CD8-positive, alpha-beta T cell (primary cell): ENCODE measurements at regions of chr1 and their contacts with region 1.

Region 1: DNA sequence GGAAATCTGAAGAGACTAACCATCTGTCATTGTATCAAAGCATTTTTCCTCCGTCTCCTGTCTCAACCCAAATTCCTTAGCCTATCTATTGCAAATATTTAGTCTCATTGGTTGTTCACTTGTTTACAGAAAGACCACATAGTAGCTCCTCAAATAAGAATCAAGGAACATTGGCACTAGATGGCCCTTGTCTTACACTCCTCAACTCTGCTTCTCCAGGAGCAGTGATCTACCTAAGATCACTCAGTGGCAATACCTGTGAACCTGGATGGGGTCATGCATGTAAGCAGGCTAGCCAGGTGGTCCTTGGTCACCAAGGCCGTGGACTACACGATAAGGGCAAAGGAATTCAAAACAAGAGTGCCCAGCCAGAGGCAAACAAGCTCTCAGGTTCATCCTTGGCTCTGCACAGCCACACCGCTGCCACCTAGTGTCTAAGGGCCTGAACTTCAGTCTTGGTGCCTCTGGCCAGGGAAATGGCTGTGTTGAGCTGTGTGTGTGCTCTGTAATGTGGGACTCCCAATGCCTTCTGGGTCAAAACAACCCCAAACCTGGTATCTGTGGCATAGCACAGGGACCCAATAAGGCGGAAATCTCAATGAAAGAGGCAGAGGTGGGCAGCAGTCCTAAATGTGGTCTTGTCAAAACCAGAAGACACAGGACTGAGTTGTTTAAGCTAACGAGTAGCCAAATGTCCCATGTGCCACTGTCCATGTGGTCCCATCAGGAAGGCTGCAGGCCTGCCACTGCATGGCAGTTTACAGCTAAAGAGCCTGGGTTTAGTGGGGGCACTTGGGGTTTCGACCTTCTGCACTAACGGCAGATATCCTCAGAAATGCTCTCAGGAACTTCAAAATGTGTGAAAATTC is 54.5 kb downstream of the GPR161 start:
- DNase-seq: peak; percentile 28 to 74 (median 60)
- ATAC-seq: peak; percentile 95
- H3K4me3 ChIP-seq: no peak overlapping the region
- H3K4me3 Mint-ChIP-seq: no peak overlapping the region
- H3K27ac ChIP-seq: no peak overlapping the region
- H3K27ac Mint-ChIP-seq: no peak overlapping the region
- H3K4me1 ChIP-seq: no peaks in the 10 kb centered on the region
- H3K4me1 Mint-ChIP-seq: peaks cover 5% of the 10 kb centered on the region
- H3K27me3 ChIP-seq: no peaks in the 10 kb centered on the region
- H3K27me3 Mint-ChIP-seq: no peaks in the 10 kb centered on the region
- CTCF ChIP-seq: peak; percentile 83

Region 2: GRCh38 chr1:167878372-167879160 is 203.7 kb before region 1 on chr1:
- CTCF ChIA-PET with region 1: no interaction called
- POLR2A ChIA-PET with region 1: no interaction called
- intact Hi-C with region 1: loop called in 1 of 2 experiments (anchors 5 kb)
- DNase-seq: peak in 2 of 9 experiments; percentile 2 to 4
- ATAC-seq: no peak
- H3K4me3 ChIP-seq: no peak overlapping the region
- H3K4me3 Mint-ChIP-seq: no peak overlapping the region
- H3K27ac ChIP-seq: no peak overlapping the region
- H3K27ac Mint-ChIP-seq: no peak overlapping the region
- H3K4me1 ChIP-seq: no peaks in the 10 kb centered on the region
- H3K4me1 Mint-ChIP-seq: no peaks in the 10 kb centered on the region
- H3K27me3 ChIP-seq: no peaks in the 10 kb centered on the region
- H3K27me3 Mint-ChIP-seq: no peaks in the 10 kb centered on the region
- CTCF ChIP-seq: no peak

Region 3: DNA sequence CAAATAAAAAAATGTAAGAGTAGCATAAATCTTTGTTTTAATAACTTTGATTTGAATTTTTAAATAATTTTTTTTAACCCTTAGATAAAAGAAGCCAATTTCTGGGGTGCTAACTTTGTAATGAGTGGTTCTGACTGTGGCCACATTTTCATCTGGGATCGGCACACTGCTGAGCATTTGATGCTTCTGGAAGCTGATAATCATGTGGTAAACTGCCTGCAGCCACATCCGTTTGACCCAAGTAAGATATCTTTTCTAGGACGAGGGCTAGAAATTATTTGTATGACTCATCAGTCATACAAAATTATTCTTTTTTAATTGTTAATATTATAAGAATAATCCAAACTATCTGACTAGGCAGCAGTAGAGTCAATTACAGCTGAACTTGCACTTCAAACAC is 16.7 kb before region 1 on chr1:
- CTCF ChIA-PET with region 1: interaction called, 11 read pairs
- POLR2A ChIA-PET with region 1: no interaction called
- intact Hi-C with region 1: no loop called
- DNase-seq: no peak
- ATAC-seq: no peak
- H3K4me3 ChIP-seq: no peak overlapping the region
- H3K4me3 Mint-ChIP-seq: no peak overlapping the region
- H3K27ac ChIP-seq: no peak overlapping the region
- H3K27ac Mint-ChIP-seq: no peak overlapping the region
- H3K4me1 ChIP-seq: no peaks in the 10 kb centered on the region
- H3K4me1 Mint-ChIP-seq: no peaks in the 10 kb centered on the region
- H3K27me3 ChIP-seq: no peaks in the 10 kb centered on the region
- H3K27me3 Mint-ChIP-seq: no peaks in the 10 kb centered on the region
- CTCF ChIP-seq: no peak

Region 4: DNA sequence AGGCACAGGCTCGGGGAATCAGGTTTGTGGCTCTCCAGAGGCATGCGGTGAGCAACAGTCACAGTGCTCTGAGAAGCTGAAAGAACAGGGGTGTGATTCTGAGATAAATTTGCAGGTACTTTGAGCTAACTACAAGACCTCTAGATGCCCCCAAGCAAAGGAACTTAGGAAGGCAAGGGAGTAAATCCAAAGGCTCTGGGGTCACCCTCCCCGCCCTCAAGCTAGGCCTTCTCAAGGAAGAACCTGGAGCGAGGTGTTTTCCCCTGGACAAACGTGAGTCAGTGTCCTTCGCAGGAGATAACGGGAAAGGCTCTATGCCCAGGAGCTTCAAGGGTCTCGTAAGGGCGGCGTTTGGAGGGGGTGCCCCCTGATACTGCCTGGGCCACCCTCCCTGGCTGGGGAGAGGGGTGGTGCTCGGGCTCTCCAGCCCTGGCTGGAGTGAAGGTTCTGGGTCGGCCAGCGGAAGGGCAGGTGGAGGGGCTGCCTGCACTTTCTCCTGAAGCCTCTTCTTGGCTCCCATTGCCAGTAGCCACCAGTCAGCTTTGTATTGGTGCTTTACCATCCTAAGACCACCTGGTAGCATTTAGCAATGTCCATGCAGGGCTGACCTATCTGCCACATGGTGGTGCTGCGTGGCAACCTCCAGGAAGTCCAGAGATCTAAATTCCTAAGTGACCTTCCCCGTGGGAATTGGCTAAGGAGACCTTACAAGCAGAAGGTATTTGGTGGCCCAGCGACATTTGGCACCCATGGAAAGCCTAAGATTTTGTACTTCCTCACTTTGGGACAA is 10.5 kb after region 1 on chr1:
- CTCF ChIA-PET with region 1: interaction called, 46 read pairs
- POLR2A ChIA-PET with region 1: no interaction called
- intact Hi-C with region 1: no loop called
- DNase-seq: peak in 1 of 9 experiments; percentile 41
- ATAC-seq: no peak
- H3K4me3 ChIP-seq: no peak overlapping the region
- H3K4me3 Mint-ChIP-seq: no peak overlapping the region
- H3K27ac ChIP-seq: no peak overlapping the region
- H3K27ac Mint-ChIP-seq: no peak overlapping the region
- H3K4me1 ChIP-seq: no peaks in the 10 kb centered on the region
- H3K4me1 Mint-ChIP-seq: no peaks in the 10 kb centered on the region
- H3K27me3 ChIP-seq: no peaks in the 10 kb centered on the region
- H3K27me3 Mint-ChIP-seq: peaks cover 6% of the 10 kb centered on the region
- CTCF ChIP-seq: no peak

Region 5: GRCh38 chr1:168116327-168116806 is 34.1 kb after region 1 on chr1:
- CTCF ChIA-PET with region 1: no interaction called
- POLR2A ChIA-PET with region 1: no interaction called
- intact Hi-C with region 1: no loop called
- DNase-seq: no peak
- ATAC-seq: no peak
- H3K4me3 ChIP-seq: no peak overlapping the region
- H3K4me3 Mint-ChIP-seq: no peak overlapping the region
- H3K27ac ChIP-seq: no peak overlapping the region
- H3K27ac Mint-ChIP-seq: no peak overlapping the region
- H3K4me1 ChIP-seq: no peaks in the 10 kb centered on the region
- H3K4me1 Mint-ChIP-seq: no peaks in the 10 kb centered on the region
- H3K27me3 ChIP-seq: no peaks in the 10 kb centered on the region
- H3K27me3 Mint-ChIP-seq: peaks cover 7% of the 10 kb centered on the region
- CTCF ChIP-seq: no peak

Region 6: DNA sequence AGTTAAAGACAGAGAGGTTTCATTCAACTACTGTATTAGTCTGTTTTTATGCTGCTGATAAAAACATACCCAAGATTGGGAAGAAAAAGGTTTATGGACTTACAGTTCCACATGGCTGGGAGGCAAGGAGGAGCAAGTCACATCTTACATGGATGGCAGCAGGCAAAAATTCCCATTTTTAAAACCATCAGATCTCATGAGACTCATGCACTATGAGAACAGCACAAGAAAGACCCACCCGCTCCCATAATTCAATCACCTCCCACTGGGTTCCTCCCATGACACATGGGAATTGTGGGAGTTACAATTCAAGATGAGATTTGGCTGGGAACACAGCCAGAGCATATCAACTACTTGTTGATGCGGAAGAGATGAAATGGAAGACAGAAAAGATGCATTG is 45.3 kb after region 1 on chr1:
- CTCF ChIA-PET with region 1: no interaction called
- POLR2A ChIA-PET with region 1: no interaction called
- intact Hi-C with region 1: no loop called
- DNase-seq: no peak
- ATAC-seq: no peak
- H3K4me3 ChIP-seq: no peak overlapping the region
- H3K4me3 Mint-ChIP-seq: no peak overlapping the region
- H3K27ac ChIP-seq: no peak overlapping the region
- H3K27ac Mint-ChIP-seq: no peak overlapping the region
- H3K4me1 ChIP-seq: no peaks in the 10 kb centered on the region
- H3K4me1 Mint-ChIP-seq: no peaks in the 10 kb centered on the region
- H3K27me3 ChIP-seq: peaks cover 0 to 2% of the 10 kb centered on the region in 2 experiments
- H3K27me3 Mint-ChIP-seq: peaks cover 43% of the 10 kb centered on the region
- CTCF ChIP-seq: no peak

Region 7: GRCh38 chr1:168145184-168146159 is 63.2 kb after region 1 on chr1:
- CTCF ChIA-PET with region 1: interaction called, 3 read pairs
- POLR2A ChIA-PET with region 1: no interaction called
- intact Hi-C with region 1: loop called in 1 of 2 experiments (anchors 2 kb)
- DNase-seq: peak; percentile 72 to 89 (median 81)
- ATAC-seq: peak; percentile 99
- H3K4me3 ChIP-seq: no peak overlapping the region
- H3K4me3 Mint-ChIP-seq: peak overlapping the region; percentile 42
- H3K27ac ChIP-seq: no peak overlapping the region
- H3K27ac Mint-ChIP-seq: no peak overlapping the region
- H3K4me1 ChIP-seq: no peaks in the 10 kb centered on the region
- H3K4me1 Mint-ChIP-seq: peaks cover 12% of the 10 kb centered on the region
- H3K27me3 ChIP-seq: no peaks in the 10 kb centered on the region
- H3K27me3 Mint-ChIP-seq: no peaks in the 10 kb centered on the region
- CTCF ChIP-seq: peak; percentile 91

Region 8: DNA sequence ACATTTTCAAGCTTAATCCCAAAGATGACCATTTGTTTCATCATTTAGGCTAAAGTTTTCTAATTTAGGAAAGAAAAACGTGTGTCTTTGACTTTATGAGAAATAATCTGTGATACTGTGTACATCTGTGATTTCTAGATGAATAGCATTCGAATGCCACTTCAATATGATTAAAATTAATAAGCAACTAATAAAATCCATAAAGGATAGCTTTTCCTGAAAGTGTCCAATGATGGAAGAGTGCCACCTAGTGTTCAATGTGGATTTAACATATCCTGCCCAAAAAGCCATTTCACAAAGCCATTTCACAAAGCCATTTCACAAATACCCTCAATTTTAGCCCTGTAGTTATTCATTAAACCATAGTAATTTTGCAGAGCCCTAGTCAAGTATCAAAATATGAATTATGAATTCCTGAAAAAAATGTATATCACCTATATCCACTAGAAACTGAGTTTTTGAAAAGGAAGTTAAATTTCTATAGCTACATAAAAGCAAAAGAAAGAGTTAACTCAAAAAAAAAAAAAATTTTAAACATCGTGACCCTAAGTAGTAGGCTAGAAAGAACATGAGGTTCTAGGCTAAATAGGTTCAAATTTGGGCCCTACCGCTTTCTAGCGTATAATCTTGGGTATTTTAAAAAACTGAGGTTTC is 1266.3 kb after region 1 on chr1:
- CTCF ChIA-PET with region 1: interaction called, 3 read pairs
- POLR2A ChIA-PET with region 1: no interaction called
- intact Hi-C with region 1: loop called in 1 of 2 experiments (anchors 5 kb)
- DNase-seq: peak in 4 of 9 experiments; percentile 20 to 77 (median 44)
- ATAC-seq: peak; percentile 49
- H3K4me3 ChIP-seq: no peak overlapping the region
- H3K4me3 Mint-ChIP-seq: no peak overlapping the region
- H3K27ac ChIP-seq: no peak overlapping the region
- H3K27ac Mint-ChIP-seq: no peak overlapping the region
- H3K4me1 ChIP-seq: no peaks in the 10 kb centered on the region
- H3K4me1 Mint-ChIP-seq: peaks cover 8% of the 10 kb centered on the region
- H3K27me3 ChIP-seq: no peaks in the 10 kb centered on the region
- H3K27me3 Mint-ChIP-seq: no peaks in the 10 kb centered on the region
- CTCF ChIP-seq: peak; percentile 99